GM10248 (cell line): ENCODE measurements at regions of chr1 and their contacts with region 1.

Region 1: DNA sequence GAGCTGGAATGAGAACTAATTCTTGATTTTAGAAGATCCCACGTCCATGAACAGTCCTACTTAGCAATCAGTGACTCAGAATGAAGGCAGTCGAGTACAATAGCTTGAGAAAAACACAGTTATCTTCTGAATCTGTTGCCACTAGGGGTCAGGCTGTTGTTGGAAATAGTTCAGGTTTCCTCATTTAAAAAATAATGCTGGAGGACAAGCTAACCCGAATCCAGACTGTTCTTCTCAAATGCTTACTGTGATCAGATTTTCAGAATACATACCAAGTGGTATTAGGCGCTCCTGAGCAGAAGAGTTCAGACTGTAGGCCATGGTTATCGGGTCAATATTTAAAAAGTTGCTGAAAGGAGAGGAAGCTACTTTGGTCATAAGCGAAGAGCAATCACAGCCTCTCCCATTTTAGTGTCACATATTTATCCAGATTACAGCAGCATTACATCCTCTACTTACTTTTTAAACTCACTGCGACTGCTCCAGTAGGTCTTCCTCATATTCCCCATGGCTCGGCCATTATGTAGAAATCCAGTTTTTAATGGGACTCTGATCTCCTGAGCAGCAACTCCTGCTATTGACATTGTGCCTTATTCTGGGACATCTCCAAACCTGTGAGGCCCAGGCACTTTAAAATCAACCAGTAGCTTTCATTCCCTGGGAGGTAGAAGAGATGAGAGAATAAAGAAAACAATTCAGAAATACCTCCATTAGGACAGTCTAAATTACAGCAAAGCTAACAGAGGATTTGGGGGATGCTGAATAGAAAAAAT is 10.9 kb downstream of the ERRFI1 start:
- DNase-seq: peak; percentile 54
- CTCF ChIP-seq: peak; percentile 63

Region 2: GRCh38 chr1:7975212-7975865 is 39.9 kb before region 1 on chr1:
- CTCF ChIA-PET with region 1: interaction called, 188 read pairs
- POLR2A ChIA-PET with region 1: no interaction called
- DNase-seq: peak; percentile 67
- CTCF ChIP-seq: peak; percentile 74

Region 3: DNA sequence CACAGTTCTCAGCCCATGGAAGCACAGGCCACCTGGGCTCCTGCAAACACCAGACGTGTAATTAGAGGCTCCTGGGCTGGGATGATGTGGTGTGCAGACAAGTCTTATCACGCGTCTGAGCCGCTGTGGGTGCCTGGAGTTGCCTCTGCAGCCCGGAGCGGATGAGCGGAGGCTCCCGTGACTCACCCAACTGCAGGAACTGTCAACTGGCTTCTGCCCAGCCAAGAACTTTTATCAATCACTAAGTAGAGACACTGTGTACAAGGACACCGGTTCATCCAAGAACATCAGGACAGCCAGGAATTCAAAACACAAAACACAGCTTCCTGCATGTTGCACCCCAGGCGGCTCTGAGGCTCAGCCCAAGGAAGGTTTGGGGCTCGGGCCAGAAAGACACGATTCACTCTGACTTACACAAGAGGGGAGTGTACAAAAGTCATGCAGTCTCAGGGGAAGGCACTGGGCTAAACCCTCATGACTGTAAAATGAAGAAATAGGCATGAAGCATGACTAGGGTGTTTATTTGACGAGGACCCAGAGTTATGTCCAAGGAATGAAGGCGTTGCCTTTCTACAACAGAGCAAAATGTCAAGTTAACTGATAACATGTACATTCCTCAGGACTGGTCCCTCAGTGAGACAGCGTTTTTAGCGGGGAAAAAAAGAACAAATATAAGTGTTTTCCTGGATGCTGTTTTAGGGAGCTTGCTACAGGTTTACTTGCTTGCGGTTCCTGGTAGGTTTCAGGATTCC is 10.2 kb before region 1 on chr1:
- CTCF ChIA-PET with region 1: interaction called, 19 read pairs
- POLR2A ChIA-PET with region 1: no interaction called
- DNase-seq: no peak
- CTCF ChIP-seq: no peak

Region 4: DNA sequence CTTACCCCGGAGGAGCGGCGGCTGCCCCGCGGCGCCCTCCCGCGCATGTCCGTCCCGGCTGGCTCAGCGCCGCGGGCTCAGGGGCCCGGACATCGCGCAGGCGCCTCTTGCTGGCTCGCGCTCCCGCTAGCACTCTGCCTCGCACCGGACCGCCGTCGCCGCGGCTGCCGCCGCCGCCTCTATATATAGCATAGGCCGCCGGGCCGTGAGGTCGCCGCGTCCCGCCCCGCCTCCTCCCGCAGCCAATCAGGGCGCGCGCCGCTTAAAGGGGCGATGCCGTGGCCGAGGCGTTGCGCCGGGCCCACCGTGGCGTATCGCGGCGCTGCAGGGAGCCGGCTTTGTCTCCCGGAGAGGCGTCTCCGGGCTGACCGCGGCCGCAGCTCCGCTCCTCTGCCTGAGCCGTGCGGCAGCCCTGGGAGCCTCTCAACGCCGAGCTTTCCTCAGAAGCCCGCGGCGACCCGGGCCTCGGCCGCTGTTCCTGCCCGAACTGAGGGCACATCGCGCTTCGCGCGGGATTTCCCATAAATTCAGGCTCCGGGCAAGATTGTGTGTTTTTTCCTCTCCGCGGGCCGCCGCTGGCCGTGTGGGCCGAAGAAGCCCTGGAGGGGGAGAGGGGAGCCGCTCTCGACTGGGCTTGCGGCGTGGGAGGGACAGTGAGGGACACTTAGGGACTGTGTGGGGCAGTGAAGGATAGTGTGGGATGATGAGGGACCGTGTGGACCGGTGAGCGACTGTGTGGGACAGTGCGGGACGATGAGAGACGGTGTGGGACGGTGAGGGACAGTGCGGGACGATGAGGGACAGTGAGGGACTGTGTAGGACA is 11.1 kb after region 1 on chr1 and contains the start of gene ERRFI1:
- CTCF ChIA-PET with region 1: interaction called, 29 read pairs
- POLR2A ChIA-PET with region 1: no interaction called
- DNase-seq: peak; percentile 94
- CTCF ChIP-seq: no peak

Region 5: GRCh38 chr1:8348777-8349491 is 333.7 kb after region 1 on chr1:
- CTCF ChIA-PET with region 1: interaction called, 91 read pairs
- POLR2A ChIA-PET with region 1: no interaction called
- DNase-seq: peak; percentile 89
- CTCF ChIP-seq: peak; percentile 84